Activated B cell treated with CpG ODN at 0.5 μM for 24 hours (primary cell): ENCODE measurements at regions of chr19 and their contacts with region 1.

Region 1: DNA sequence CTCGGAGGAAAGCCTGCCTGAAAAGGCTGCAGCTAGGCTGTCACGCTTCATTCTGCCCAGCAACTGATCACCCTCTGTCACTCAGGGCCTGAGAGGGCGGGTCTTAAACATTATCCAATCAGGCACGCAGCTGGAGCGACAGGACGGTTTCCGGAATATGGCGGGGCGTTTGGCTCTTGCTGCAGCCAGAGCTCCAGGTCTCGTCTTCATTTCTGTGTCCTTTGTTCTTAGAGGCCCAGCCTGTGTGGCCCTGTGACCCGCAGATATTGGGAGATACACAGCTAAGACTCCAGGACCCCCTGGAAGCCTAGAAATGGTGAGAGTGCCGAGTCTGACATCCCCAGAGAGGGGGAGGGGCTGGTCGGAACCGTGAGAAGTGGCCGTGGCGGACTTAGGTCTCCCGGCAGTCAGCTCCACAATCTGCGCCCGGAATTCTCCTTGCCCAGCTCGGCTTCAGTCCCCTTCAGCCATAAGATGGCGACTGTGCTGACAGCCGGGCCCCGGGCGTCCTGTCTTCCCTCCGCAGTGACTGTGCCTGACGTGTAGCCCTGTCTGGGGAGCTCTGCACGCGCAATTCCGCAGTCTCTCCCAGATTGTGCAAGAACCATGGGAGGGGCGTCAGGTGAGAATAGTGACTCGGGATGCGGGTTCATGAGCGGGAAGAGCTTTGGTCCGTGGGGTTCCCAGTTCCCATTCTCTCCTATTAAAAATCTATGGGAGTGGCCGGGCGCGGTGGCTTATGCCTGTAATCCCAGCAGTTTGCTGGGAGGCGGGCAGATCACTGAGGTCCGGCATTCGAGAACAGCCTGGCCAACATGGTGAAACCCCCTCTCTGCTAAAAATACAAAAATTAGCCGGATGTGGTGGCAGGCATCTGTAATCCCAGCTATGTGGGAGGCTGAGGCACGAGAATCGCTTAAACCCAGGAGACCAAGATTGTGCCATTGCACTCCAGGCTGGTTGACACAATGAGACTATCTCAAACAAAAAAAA is at the start of gene ZNF429:
- DNase-seq: peak; percentile 73
- ATAC-seq: peak; percentile 99
- H3K4me3 Mint-ChIP-seq: peak within 1 kb of the TSS; percentile 100
- H3K27ac Mint-ChIP-seq: peak within 1 kb of the TSS; percentile 99
- H3K4me1 Mint-ChIP-seq: peaks cover 38% of the 10 kb centered on the region
- H3K27me3 Mint-ChIP-seq: no peaks in the 10 kb centered on the region
- CTCF ChIP-seq: no peak
- total RNA-seq, gene ZNF429: 19.5 and 19.9 TPM in 2 replicates

Region 2: DNA sequence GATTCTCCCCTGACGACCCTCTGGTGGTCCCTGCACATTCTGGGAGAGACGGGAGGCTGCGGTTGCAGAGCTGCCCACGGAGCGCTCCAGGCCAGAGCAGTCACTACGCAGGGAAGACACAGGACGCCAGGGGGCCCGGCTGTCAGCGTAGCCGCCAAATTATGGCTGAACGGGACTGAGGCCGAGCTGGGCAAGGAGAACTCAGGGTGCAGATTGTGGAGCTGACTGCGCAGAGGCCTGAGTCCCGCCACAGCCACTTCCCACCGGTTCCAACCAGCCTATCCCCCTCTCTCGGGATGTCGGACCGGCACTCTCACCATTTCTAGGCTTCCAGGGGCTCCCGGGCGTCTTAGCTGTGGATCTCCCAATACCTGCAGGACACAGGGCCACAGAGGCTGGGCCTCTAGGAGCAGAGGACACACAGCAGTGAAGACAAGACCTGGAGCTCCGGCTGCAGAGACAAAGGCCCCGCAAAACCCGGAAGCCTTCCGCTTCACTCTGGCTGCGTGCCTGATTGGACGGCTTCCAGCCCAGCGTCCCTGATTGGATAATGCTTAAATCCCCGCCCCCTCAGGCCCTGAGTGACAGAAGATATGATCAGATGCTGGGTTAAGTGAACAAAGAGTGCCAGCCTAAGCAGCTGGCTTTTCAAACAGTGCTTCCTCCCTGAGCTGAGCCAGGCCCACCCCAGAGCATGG is 940.3 kb before region 1 on chr19 and contains the start of gene ZNF737:
- CTCF ChIA-PET with region 1: no interaction called
- POLR2A ChIA-PET with region 1: interaction called, 29 read pairs
- intact Hi-C with region 1: no loop called
- DNase-seq: peak; percentile 72
- ATAC-seq: peak; percentile 90
- H3K4me3 Mint-ChIP-seq: peak within 1 kb of the TSS; percentile 99
- H3K27ac Mint-ChIP-seq: peak within 1 kb of the TSS; percentile 99
- H3K4me1 Mint-ChIP-seq: peaks cover 32% of the 10 kb centered on the region
- H3K27me3 Mint-ChIP-seq: no peaks in the 10 kb centered on the region
- CTCF ChIP-seq: no peak
- total RNA-seq, gene ZNF737: 42.7 and 50.9 TPM in 2 replicates

Region 3: DNA sequence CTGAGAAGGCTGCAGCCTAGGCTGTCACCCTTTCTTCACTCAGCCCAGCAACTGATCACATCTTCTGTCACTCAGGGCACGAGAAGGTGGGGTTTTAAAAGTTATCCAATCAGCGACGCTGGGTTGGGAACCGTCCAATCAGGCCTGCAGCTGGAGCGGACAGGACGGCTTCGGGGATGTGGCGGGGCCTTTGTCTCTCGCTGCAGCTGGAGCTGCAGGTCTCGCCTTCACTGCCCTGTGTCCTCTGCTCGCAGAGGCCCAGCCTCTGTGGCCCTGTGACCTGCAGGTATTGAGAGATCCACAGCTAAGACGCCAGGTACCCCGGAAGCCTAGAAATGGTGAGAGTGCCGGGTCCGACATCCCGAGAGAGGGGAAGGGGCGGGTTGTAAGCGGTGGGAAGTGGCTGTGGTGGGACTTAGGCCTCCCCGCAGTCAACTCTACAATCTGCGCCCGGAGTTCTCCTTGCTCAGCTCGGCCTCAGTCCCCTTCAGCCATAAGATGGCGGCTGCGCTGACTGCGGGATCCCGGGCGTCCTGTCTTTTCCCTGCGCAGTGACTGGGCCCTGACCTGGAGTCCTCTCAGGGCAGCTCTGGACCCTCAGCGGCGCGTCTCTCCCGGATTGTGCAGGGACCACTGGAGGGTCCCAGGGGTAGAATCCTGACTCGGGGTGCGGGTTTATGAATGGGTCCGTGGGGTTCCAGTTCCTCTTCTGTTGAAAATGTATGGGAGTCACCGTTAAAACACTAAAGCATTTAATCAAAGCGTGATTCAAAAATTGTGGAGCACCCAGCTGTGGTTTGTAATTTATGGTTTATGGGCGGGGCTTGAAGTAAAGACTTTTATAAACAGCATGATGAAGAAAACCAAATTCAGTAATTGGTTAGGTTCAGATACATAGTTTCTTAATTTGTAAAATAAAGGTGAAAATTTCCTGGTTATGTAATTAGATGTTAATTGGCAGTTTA is 423.5 kb before region 1 on chr19 and contains the start of gene ZNF714:
- CTCF ChIA-PET with region 1: no interaction called
- POLR2A ChIA-PET with region 1: no interaction called
- intact Hi-C with region 1: loop called (anchors 5 kb)
- DNase-seq: peak; percentile 63
- ATAC-seq: peak; percentile 100
- H3K4me3 Mint-ChIP-seq: peak within 1 kb of the TSS; percentile 100
- H3K27ac Mint-ChIP-seq: peak within 1 kb of the TSS; percentile 93
- H3K4me1 Mint-ChIP-seq: peaks cover 13% of the 10 kb centered on the region
- H3K27me3 Mint-ChIP-seq: no peaks in the 10 kb centered on the region
- CTCF ChIP-seq: no peak
- total RNA-seq, gene ZNF714: 11.1 and 12.5 TPM in 2 replicates

Region 4: DNA sequence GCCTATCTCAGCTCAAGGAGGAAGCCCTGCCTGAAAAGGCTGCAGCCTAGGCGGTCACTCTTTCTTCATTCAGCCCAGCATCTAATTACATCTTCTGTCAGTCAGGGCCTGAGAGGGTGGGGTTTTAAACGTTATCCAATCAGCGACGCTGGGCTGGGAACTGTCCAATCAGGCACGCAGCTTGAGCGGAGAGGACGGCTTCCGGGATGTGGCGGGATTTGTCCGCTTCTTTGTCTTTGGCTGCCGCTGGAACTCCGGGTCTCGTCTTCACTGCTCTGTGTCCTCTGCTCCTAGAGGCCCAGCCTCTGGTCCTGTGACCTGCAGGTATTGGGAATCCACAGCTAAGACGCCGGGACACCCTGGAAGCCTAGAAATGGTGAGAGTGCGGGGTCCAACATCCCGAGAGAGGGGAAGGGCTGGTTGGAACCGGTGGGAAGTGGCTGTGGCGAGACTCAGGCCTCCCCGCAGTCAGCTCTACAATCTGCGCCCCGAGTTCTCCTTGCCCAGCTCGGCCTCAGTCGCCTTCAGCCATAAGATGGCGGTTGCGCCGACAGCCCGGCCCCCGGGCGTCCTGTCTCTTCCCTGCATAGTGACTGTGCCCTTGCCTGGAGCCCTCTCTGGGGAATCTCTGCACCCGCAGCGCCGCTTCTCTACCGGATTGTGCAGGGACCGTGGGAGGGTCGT is 146.8 kb before region 1 on chr19 and contains the start of gene ZNF738:
- CTCF ChIA-PET with region 1: no interaction called
- POLR2A ChIA-PET with region 1: interaction called, 7 read pairs
- intact Hi-C with region 1: loop called (anchors 1 kb)
- DNase-seq: peak; percentile 70
- ATAC-seq: peak; percentile 96
- H3K4me3 Mint-ChIP-seq: peak within 1 kb of the TSS; percentile 100
- H3K27ac Mint-ChIP-seq: peak within 1 kb of the TSS; percentile 96
- H3K4me1 Mint-ChIP-seq: peaks cover 13% of the 10 kb centered on the region
- H3K27me3 Mint-ChIP-seq: no peaks in the 10 kb centered on the region
- CTCF ChIP-seq: no peak
- total RNA-seq, gene ZNF738: 18.7 and 22.2 TPM in 2 replicates

Region 5: GRCh38 chr19:21559444-21559843 is 53.7 kb after region 1 on chr19:
- CTCF ChIA-PET with region 1: no interaction called
- POLR2A ChIA-PET with region 1: no interaction called
- intact Hi-C with region 1: no loop called
- DNase-seq: no peak
- ATAC-seq: no peak
- H3K4me3 Mint-ChIP-seq: no peak overlapping the region
- H3K27ac Mint-ChIP-seq: no peak overlapping the region
- H3K4me1 Mint-ChIP-seq: peaks cover under 1% of the 10 kb centered on the region
- H3K27me3 Mint-ChIP-seq: no peaks in the 10 kb centered on the region
- CTCF ChIP-seq: no peak

Region 6: GRCh38 chr19:21767065-21767800 is 261.5 kb after region 1 on chr19 and contains the start of gene ZNF100:
- CTCF ChIA-PET with region 1: no interaction called
- POLR2A ChIA-PET with region 1: interaction called, 15 read pairs
- intact Hi-C with region 1: loop called (anchors 1 kb)
- DNase-seq: peak; percentile 70
- ATAC-seq: peak; percentile 98
- H3K4me3 Mint-ChIP-seq: peak within 1 kb of the TSS; percentile 95
- H3K27ac Mint-ChIP-seq: peak within 1 kb of the TSS; percentile 88
- H3K4me1 Mint-ChIP-seq: peaks cover 18% of the 10 kb centered on the region
- H3K27me3 Mint-ChIP-seq: no peaks in the 10 kb centered on the region
- CTCF ChIP-seq: no peak
- total RNA-seq, gene ZNF100: 21.1 and 22.4 TPM in 2 replicates